ENCODE measurements at regions of chr12 and their contacts with region 1.

Region 1: DNA sequence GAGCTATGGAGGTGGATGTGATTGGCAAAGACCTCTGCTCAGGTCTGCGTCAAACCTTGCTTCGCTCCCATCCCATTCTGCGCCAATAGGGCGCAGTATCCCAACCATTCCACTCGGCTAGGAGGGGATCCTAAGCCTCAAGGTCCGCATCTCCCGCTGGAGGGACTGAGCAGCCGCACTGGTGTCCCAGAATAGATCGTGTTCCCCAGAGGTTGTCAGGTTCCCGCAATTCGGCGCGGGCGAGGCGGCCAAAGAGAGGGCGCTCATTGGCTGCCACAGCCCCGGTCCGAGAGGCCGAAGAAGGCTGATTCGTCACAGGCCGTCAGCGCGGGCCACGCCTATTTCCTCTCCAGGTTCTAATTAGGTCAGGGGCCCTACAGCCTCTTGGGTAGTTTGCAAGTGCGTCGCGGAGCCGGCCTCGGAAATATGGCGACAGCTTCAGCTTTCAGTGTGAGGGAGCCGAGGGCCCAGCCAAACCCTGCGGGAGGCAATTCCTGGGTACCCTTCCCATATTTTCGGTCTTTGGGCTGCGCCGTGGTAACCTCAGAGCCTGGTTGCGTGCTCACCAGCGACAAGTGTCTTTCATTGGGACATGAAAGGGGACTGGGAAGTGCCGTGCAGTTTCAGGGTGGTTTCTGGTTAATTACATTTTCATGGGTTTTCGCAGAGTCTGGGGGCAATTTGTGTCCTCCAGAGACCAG is 5.0 kb downstream of the OR10AD1 start:
- DNase-seq: peak; percentile 96 to 100 (median 99)
- H3K4me3 ChIP-seq: peak overlapping the region; percentile 49 to 75 (median 70)
- H3K27ac ChIP-seq: peak overlapping the region; percentile 99 to 100 (median 99)
- H3K4me1 ChIP-seq: peaks cover 23 to 47% of the 10 kb centered on the region in 2 donors
- H3K27me3 ChIP-seq: no peaks in the 10 kb centered on the region
- CTCF ChIP-seq: peak in 1 of 6 experiments; percentile 18
- POLR2A ChIP-seq: peak; percentile 97 to 99

Region 2: GRCh38 chr12:48296586-48297282 is 98.6 kb after region 1 on chr12:
- intact Hi-C with region 1: loop called in 1 of 2 experiments (anchors 10 kb)
- DNase-seq: peak; percentile 83 to 96 (median 90)
- H3K4me3 ChIP-seq: peak overlapping the region in 2 of 4 donors; percentile 44 to 57
- H3K27ac ChIP-seq: peak overlapping the region in 3 of 5 donors; percentile 7 to 68 (median 65)
- H3K4me1 ChIP-seq: peaks cover 0 to 2% of the 10 kb centered on the region in 2 donors
- H3K27me3 ChIP-seq: no peaks in the 10 kb centered on the region
- CTCF ChIP-seq: no peak
- POLR2A ChIP-seq: peak; percentile 30 to 87

Region 3: DNA sequence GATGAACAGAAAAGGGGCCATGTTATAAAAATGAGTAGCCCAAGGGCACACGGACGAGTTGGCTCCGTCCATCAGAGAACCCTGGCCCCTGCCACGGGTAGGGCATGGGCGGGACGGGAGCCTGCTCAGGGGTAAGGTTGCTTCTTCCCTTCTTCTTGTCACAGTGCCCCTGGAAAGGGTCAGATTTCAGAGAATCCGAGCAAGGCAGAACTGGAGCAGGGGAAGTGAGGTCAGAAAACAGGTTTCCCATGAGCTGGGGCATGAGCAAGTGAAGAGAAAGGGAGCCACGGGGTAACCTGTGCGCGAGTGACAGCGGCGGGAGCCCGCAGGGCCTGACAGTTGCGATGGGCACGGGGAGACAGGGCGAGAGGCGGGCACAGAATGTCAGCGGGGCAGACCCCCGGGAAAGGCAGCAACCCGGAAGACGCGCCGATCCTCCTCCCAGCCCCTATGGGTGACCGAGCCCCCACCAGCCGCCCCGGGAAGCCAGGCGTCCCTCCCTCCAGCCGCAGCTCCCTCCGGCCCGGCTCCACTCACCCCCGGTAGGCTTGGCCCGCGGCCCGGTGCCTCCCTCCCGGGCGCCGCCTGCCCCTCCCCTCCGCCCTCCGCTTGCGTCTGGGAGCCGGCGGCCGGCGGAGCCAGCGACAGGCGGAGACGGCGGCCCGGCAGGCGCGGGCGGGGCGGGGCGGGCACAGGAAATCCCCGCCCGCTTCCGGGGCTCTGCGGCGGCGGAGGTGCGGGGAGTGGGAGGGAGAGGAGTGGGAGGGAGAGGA is 152.3 kb after region 1 on chr12 and contains the start of gene ZNF641:
- intact Hi-C with region 1: loop called in 1 of 2 experiments (anchors 5 kb)
- DNase-seq: peak; percentile 81 to 91 (median 87)
- H3K4me3 ChIP-seq: peak within 1 kb of the TSS; percentile 44 to 99 (median 68)
- H3K27ac ChIP-seq: peak within 1 kb of the TSS; percentile 82 to 100 (median 95)
- H3K4me1 ChIP-seq: peaks cover 25 to 32% of the 10 kb centered on the region in 2 donors
- H3K27me3 ChIP-seq: no peaks in the 10 kb centered on the region
- CTCF ChIP-seq: no peak
- POLR2A ChIP-seq: peak in 1 of 2 donors; percentile 56
- total RNA-seq, gene ZNF641: 32.5 to 65.2 (median 46.6) TPM

Measured in adrenal gland (tissue), 19 donors.